ENCODE measurements at regions of chr6 and their contacts with region 1.

Region 1: DNA sequence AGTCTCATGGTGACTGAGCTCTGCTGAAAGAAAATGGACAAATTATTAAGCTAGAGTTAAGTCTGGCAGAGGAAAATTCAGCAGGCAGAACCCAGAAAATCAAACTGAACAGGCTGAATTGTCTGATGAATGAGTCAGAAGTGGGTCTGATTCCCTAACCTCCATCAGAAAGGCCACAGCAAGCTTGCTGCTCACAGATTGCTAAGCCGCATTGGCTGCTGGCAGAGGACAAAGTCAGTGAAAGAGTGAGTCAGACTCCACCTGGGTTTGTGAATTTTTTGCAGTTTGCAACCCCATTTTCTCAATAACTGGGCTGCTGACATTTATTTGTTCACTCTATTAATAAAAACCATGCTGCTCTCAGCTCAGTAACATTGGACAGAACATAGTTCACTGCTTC is 191.3 kb downstream of the EPM2A start:
- DNase-seq: peak; percentile 82
- ATAC-seq: peak; percentile 96
- H3K4me3 ChIP-seq: 0 out of 2 replicates have a peak overlapping the region, but pooled peaks have one; percentile 32
- H3K27ac ChIP-seq: peak overlapping the region; percentile 92
- H3K4me1 ChIP-seq: peaks cover 33% of the 10 kb centered on the region
- H3K27me3 ChIP-seq: no peaks in the 10 kb centered on the region
- CTCF ChIP-seq: no peak

Region 2: GRCh38 chr6:144978208-144978607 is 565.8 kb before region 1 on chr6:
- CTCF ChIA-PET with region 1: no interaction called
- POLR2A ChIA-PET with region 1: no interaction called
- intact Hi-C with region 1: no loop called
- DNase-seq: no peak
- ATAC-seq: no peak
- H3K4me3 ChIP-seq: no peak overlapping the region
- H3K27ac ChIP-seq: no peak overlapping the region
- H3K4me1 ChIP-seq: peaks cover 11% of the 10 kb centered on the region
- H3K27me3 ChIP-seq: no peaks in the 10 kb centered on the region
- CTCF ChIP-seq: no peak

Region 3: DNA sequence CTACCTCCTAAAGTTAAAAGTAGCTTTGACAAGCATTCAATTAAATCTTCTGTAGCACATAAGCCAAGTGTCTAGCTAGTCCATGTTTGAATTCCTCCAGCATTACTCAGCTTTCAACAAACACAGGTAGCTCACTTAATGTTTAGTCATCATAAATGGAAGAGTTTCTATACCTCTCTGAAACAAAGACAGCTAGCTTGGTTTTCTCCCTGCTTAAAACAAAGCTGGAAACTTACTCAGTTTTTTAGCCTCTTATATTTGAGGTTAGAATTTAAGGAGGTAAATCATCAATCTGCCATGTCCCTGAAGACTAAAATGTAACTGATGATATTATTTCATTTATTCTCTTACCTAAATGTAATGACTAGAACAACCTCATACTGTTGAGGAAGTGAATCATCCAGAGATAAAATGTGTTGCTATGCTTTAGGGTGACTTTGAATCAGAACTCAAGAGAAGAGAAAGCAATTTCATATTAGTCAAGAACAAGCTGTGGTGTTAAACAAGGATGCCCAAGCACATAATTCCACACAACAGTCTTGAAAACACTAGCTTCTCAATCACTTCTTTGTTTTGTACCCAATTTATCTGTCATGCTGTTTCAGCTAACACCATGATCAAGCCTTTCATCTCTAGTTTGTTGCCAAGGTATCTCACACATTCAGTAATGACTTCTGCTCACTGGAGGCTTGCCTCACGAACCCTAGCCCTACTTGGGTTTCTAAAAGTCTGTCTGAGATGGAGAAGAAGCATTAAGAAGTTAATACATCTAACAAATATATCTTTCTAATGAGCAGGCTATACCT is 60.6 kb before region 1 on chr6:
- CTCF ChIA-PET with region 1: no interaction called
- POLR2A ChIA-PET with region 1: no interaction called
- intact Hi-C with region 1: loop called (anchors 5 kb)
- DNase-seq: peak; percentile 87
- ATAC-seq: peak; percentile 98
- H3K4me3 ChIP-seq: peak overlapping the region; percentile 25; the same call in 1 of the 2 replicates
- H3K27ac ChIP-seq: peak overlapping the region; percentile 59
- H3K4me1 ChIP-seq: peaks cover 27% of the 10 kb centered on the region
- H3K27me3 ChIP-seq: no peaks in the 10 kb centered on the region
- CTCF ChIP-seq: no peak